Cardiac septum (tissue), 1 donor: ENCODE measurements at regions of chr1 and their contacts with region 1.

Region 1: GRCh38 chr1:153220606-153221303 is 3.4 kb downstream of the PRR9 start:
- DNase-seq: no peak

Region 2: GRCh38 chr1:152654110-152654509 is 566.6 kb before region 1 on chr1:
- intact Hi-C with region 1: loop called (anchors 5 kb)
- DNase-seq: no peak

Region 3: DNA sequence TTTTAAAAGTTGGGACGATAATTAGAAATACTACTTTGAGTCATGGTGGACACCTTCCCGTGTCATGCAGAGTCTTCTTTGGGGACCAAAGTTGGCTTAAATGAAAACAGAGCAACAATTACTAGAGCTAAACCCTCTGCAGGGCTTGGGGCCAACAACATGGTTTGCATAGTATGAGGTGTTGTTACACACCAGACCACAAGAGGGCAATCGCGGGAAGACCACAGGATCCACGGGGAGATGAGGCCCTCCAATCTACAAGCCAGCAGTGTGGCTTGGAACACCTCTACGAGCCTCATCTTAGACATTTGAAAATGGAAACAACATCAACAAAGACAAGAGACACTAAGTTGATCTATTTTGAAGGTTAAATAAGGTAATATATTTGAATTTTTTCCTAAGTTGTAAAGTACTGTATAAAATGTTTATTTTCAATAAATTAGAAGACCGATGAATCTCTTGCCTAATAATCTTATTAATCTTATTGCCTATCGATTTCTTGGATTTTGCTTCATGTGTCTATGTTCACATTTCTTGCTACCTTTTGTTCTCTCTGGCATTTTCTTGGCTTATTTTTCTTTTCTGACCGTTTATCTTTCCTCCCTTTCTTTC is 350.8 kb before region 1 on chr1:
- intact Hi-C with region 1: loop called (anchors 2 kb)
- DNase-seq: no peak

Region 4: GRCh38 chr1:153122831-153123421 is 97.8 kb before region 1 on chr1:
- intact Hi-C with region 1: no loop called
- DNase-seq: no peak